HEK293 (cell line): ENCODE measurements at regions of chr1 and their contacts with region 1.

Region 1: DNA sequence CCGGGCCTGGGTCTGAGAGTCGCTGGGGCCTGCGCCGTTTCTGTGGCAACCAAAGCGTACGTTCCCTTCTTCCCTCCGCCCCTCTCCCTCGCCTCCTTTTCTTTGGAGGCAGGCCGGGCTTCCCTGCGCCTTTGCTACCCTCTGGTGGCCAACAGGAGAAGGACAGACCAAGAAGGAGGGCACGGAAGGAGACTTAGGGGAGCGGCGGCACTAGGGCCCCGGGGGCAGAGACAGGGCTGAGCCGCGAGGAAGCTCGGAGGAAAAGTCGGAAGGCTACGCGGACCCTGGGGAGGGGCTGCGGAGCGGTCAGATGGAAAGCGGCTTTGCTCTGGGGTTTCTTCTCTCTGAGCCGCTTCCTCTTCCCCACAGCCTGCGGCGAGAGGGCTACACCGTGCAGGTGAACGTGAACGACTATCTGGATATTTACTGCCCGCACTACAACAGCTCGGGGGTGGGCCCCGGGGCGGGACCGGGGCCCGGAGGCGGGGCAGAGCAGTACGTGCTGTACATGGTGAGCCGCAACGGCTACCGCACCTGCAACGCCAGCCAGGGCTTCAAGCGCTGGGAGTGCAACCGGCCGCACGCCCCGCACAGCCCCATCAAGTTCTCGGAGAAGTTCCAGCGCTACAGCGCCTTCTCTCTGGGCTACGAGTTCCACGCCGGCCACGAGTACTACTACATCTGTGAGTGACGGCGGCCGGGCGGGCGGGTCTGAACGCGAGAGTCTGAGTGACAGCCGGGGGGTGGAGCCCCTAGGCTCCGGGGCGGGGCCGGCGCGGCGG is 6.3 kb downstream of the EFNA3 start:
- H3K4me3 ChIP-seq: peak overlapping the region; percentile 78
- H3K27ac ChIP-seq: peak overlapping the region; percentile 61; the same call in 1 of the 2 replicates
- H3K4me1 ChIP-seq: peaks cover 10% of the 10 kb centered on the region
- CTCF ChIP-seq: peak; percentile 97

Region 2: GRCh38 chr1:154791292-154792166 is 293.4 kb before region 1 on chr1:
- CTCF ChIA-PET with region 1: no interaction called
- POLR2A ChIA-PET with region 1: no interaction called
- H3K4me3 ChIP-seq: no peak overlapping the region
- H3K27ac ChIP-seq: no peak overlapping the region
- H3K4me1 ChIP-seq: peaks cover 7% of the 10 kb centered on the region
- CTCF ChIP-seq: no peak

Region 3: GRCh38 chr1:154809436-154810413 is 275.2 kb before region 1 on chr1:
- CTCF ChIA-PET with region 1: no interaction called
- POLR2A ChIA-PET with region 1: no interaction called
- H3K4me3 ChIP-seq: no peak overlapping the region
- H3K27ac ChIP-seq: no peak overlapping the region
- H3K4me1 ChIP-seq: no peaks in the 10 kb centered on the region
- CTCF ChIP-seq: no peak

Region 4: DNA sequence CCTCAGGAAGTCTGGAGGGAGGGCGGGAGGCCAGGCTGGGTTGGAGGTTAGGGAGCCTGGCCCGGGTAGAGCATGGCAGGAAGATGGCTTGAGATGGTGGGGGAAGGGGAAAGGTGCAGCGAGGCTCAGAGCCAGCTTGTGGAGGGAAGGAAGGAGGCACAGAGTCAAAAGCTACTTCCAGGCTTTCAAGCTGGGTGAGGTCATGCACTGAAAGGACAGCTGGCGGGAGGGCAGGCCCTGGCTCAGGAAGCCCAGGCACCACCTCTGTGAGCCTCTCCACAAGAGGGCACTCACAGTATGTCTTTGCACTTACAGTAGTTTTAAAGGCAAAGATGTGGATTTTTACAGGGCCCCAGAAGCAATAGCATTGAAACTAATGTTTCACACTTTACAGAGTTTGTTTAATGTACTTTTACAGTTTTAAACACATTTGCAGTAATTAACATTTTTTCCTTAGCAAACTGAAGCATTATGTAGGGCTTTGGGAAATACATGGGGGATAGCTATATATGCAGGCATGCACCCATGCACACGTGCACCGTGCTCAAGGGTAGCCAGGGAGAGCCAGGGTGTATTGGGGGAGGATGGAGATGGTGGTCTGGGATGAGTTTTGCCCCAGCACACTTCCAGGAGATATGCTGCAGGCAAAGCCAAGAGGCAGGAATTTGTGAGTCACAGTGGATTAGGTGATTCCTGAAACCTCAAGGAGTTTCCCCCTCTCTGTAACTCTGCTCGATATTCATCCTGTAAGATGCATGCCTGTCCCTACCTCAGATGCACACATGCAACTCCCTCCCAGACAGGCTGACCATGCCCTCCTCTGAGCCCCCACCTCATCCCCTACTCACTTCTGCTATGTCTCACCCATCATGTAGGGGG is 39.9 kb before region 1 on chr1:
- CTCF ChIA-PET with region 1: interaction called, 33 read pairs
- POLR2A ChIA-PET with region 1: no interaction called
- H3K4me3 ChIP-seq: no peak overlapping the region
- H3K27ac ChIP-seq: no peak overlapping the region
- H3K4me1 ChIP-seq: peaks cover 6% of the 10 kb centered on the region
- CTCF ChIP-seq: peak; percentile 72

Region 5: DNA sequence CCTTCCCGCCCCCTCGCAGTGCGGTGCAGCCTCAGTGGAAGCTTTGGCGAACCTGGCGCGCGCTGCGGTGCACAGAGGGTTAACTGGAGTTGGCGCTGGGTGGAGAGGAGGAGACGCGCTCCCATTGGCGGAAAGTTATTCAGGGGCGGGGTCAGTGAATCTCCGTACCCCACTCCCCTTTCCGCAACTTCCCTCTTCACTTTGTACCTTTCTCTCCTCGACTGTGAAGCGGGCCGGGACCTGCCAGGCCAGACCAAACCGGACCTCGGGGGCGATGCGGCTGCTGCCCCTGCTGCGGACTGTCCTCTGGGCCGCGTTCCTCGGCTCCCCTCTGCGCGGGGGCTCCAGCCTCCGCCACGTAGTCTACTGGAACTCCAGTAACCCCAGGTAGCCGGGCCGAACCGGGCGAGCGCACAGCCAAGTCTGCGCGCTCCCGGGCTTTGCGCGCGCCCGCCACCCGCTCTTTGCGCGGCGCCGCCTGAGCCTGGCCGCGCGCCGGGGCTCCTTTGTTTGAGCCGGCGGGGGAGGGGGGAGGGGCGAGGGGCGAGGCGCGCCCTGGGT is 21.3 kb before region 1 on chr1 and contains the start of gene EFNA4:
- CTCF ChIA-PET with region 1: interaction called, 117 read pairs
- POLR2A ChIA-PET with region 1: interaction called, 6 read pairs
- H3K4me3 ChIP-seq: peak within 1 kb of the TSS; percentile 88
- H3K27ac ChIP-seq: peak within 1 kb of the TSS; percentile 64; the same call in 1 of the 2 replicates
- H3K4me1 ChIP-seq: no peaks in the 10 kb centered on the region; the same call in none of the 2 replicates
- CTCF ChIP-seq: no peak

Region 6: DNA sequence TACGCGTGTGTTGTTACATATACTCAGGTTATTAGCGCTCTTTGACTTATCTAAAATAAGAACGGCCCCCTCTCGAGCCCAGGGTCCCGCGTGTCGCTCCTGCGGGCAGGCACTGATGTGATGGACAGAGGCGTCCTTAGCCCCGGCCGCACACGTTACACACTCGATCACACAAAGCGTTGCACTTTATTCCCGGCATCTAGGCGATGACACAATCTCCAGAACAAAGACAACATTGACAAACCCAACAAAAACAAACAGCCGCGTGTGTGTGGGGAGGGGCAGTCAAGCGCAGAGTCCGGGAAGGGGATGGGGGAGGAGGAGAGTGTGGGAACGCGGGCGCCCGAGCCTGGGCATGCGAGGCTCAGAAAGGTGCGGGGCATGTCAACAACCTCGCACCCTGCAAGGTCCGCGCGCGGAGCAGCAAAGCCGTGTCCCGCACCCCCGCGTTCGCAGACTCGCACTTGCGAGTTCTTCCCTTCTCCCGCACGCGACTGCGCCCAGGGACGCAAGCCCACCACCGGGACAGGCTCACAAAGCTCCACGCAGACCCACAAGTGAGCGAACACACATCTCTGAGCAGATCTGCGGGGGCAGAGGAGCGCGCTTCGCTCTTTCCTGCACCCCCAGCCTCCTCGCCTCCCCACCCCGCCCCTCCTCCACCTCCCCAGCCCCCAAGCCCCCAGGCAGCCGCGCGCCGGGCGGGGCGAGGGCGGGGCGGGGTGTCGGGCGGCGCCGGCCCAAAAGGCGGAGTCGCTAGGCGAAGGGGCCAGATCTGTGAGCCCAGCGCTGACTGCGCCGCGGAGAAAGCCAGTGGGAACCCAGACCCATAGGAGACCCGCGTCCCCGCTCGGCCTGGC is 42.4 kb after region 1 on chr1 and contains the start of gene EFNA1:
- CTCF ChIA-PET with region 1: interaction called, 11 read pairs
- POLR2A ChIA-PET with region 1: interaction called, 4 read pairs
- H3K4me3 ChIP-seq: peak within 1 kb of the TSS; percentile 62
- H3K27ac ChIP-seq: peak within 1 kb of the TSS; percentile 75
- H3K4me1 ChIP-seq: peaks cover 21% of the 10 kb centered on the region
- CTCF ChIP-seq: no peak; the same call in 1 of the 2 replicates